Head of caudate nucleus (tissue), 42 donors: ENCODE measurements at regions of chr10 and their contacts with region 1.

Region 1: GRCh38 chr10:126569513-126570244 is 100.8 kb downstream of the C10orf90 start:
- DNase-seq: peak in 2 of 42 donors; percentile 25 to 50

Region 2: GRCh38 chr10:126387023-126387921 is 182.4 kb before region 1 on chr10:
- intact Hi-C with region 1: no loop called
- DNase-seq: peak; percentile 65 to 93 (median 84)

Region 3: GRCh38 chr10:126397640-126398382 is 171.9 kb before region 1 on chr10:
- intact Hi-C with region 1: no loop called
- DNase-seq: peak in 1 of 42 donors; percentile 56

Region 4: GRCh38 chr10:126663328-126663727 is 93.6 kb after region 1 on chr10:
- intact Hi-C with region 1: loop called (anchors 10 kb)
- DNase-seq: peak; percentile 66 to 97 (median 91)